ENCODE measurements at regions of chr10 and their contacts with region 1.

Region 1: DNA sequence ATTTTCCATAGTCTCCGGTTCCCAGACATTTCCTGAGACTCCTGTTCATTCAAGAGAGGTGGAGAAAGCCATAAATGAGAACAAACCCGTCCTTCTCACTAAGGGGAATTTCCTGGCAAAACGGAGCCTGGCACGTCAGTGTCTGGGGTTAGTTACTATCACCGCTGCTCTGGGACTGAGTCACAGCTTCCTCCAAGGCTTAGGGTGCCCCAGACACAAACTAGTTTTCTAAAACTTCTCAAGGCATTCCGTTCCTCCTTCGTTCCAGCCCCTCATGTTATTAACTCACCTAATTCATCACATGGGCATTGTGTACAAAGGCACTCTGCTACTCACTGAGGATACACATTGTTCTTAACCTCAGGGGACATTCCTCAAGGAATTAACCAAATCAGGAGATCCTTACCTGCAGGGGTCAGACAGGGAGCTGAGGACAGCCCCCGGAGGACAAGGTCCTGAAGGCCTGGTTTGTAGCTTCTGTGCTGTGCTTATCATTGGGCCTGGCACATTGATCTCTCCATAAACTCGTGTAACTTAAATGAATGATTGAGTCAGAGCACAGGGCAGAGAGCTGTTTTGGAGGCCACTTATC is 103.0 kb upstream of the KLF6 start:
- DNase-seq: peak; percentile 97
- ATAC-seq: peak; percentile 70
- H3K4me3 ChIP-seq: no peak overlapping the region
- H3K27ac ChIP-seq: peak overlapping the region; percentile 90
- H3K4me1 ChIP-seq: peaks cover 29% of the 10 kb centered on the region
- H3K27me3 ChIP-seq: no peaks in the 10 kb centered on the region
- CTCF ChIP-seq: no peak
- POLR2A ChIP-seq: peak; percentile 52; the same call in 1 of the 2 replicates
- RAD21 ChIP-seq: peak; percentile 28

Region 2: GRCh38 chr10:3186368-3186767 is 701.6 kb before region 1 on chr10:
- CTCF ChIA-PET with region 1: no interaction called
- POLR2A ChIA-PET with region 1: no interaction called
- dilution Hi-C with region 1: no loop called
- in situ Hi-C with region 1: no loop called
- intact Hi-C with region 1: no loop called
- DNase-seq: no peak
- ATAC-seq: no peak
- H3K4me3 ChIP-seq: no peak overlapping the region
- H3K27ac ChIP-seq: no peak overlapping the region
- H3K4me1 ChIP-seq: no peaks in the 10 kb centered on the region
- H3K27me3 ChIP-seq: peaks cover 16% of the 10 kb centered on the region
- CTCF ChIP-seq: no peak
- POLR2A ChIP-seq: no peak
- RAD21 ChIP-seq: no peak

Region 3: DNA sequence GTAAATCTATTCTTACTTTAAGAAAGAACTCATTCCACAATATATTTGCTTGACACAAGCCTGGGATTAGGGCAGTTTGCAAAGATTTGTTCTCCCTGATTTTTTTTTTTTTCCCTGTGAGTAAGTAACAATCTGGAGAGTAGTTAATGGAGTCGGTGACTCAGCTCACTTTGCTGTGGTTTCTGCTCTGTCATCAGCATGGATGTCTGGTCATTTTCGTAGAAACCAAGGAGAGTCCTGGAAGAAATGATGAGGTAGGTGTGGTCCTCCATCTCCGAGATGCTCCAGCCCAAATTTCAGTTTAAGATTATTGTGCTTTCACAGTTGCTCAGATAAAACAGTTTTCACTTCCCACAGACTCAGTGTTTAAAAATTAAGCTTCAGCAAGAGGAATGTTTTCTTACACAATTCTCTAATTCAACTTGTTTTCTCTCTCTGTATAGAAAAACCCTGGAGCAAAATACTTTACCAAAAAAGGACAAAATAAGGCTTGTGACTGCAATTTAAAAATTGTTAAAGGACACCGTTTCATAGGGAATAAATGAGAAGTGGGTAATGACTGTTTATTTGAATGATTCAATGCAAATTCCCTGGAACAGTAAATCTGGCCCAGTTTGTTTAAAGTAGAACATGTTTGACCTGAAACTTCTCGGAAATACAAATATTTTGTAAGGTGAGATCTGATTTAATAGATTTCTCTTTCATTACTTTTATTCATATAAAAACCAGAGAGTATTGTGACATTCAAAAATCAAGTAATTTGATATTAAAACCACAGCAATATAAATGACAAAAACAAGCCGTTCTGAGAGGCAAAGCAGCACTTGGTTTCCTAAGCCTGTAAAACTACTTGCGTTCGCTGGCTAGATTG is 638.9 kb before region 1 on chr10:
- CTCF ChIA-PET with region 1: no interaction called
- POLR2A ChIA-PET with region 1: no interaction called
- dilution Hi-C with region 1: no loop called
- in situ Hi-C with region 1: no loop called
- intact Hi-C with region 1: loop called (anchors 2 kb)
- DNase-seq: peak; percentile 94
- ATAC-seq: peak; percentile 95
- H3K4me3 ChIP-seq: peak overlapping the region; percentile 11; the same call in 1 of the 2 replicates
- H3K27ac ChIP-seq: peak overlapping the region; percentile 89
- H3K4me1 ChIP-seq: peaks cover 4% of the 10 kb centered on the region
- H3K27me3 ChIP-seq: no peaks in the 10 kb centered on the region
- CTCF ChIP-seq: no peak
- POLR2A ChIP-seq: no peak
- RAD21 ChIP-seq: no peak; the same call in 1 of the 2 replicates

Region 4: DNA sequence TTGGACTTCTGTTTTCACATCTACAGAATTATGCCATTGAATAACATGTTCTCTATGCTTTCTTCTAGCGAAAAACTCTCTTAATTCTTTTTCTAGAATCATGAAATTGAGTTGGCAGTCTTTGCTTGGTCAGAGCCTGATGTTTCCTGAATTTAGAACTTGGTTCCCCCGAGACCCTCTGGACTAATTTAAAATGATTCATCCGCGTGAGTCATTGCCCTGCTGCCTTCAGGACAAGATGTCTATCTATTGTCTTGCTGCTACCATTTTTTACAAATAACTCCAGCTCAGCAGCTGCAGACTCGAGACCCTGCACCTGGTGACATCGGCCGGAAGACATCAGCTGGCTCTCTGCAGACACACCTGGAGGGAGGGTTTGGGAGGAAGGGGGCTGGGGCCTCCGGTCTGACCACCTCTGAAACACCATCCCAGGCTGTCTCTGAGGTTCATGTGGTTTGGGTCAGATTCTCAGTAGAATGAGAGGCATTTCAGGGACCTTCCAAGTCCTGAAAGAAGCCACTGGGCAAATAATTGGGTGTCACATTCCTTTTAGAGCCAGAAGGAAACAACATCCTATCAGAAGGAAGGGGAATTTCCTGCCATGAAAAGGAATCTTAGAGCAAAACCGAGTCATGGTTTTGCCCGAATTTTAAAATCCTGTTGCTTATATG is 82.1 kb before region 1 on chr10:
- CTCF ChIA-PET with region 1: no interaction called
- POLR2A ChIA-PET with region 1: no interaction called
- dilution Hi-C with region 1: no loop called
- in situ Hi-C with region 1: loop called (anchors 5 kb)
- intact Hi-C with region 1: no loop called
- DNase-seq: peak; percentile 77
- ATAC-seq: no peak; the same call in 1 of the 2 replicates
- H3K4me3 ChIP-seq: no peak overlapping the region
- H3K27ac ChIP-seq: peak overlapping the region; percentile 84
- H3K4me1 ChIP-seq: peaks cover 24% of the 10 kb centered on the region
- H3K27me3 ChIP-seq: no peaks in the 10 kb centered on the region
- CTCF ChIP-seq: no peak
- POLR2A ChIP-seq: no peak
- RAD21 ChIP-seq: no peak